ENCODE measurements at regions of chr19 and their contacts with region 1.

Region 1: GRCh38 chr19:42132851-42133528 is 744 bp upstream of the POU2F2 start:
- DNase-seq: peak; percentile 54 to 89 (median 68)
- ATAC-seq: peak in 3 of 4 donors; percentile 71 to 87 (median 74)
- H3K4me3 ChIP-seq: peak overlapping the region in 10 of 12 donors; percentile 12 to 65 (median 32)
- H3K27ac ChIP-seq: peak overlapping the region in 1 of 12 donors; percentile 64
- H3K4me1 ChIP-seq: peaks cover 2 to 54% (median 10%) of the 10 kb centered on the region in 12 donors
- H3K27me3 ChIP-seq: peaks cover 6 to 53% (median 21%) of the 10 kb centered on the region in 9 donors
- CTCF ChIP-seq: peak; percentile 90 to 99 (median 96)
- POLR2A ChIP-seq: no peak

Region 2: DNA sequence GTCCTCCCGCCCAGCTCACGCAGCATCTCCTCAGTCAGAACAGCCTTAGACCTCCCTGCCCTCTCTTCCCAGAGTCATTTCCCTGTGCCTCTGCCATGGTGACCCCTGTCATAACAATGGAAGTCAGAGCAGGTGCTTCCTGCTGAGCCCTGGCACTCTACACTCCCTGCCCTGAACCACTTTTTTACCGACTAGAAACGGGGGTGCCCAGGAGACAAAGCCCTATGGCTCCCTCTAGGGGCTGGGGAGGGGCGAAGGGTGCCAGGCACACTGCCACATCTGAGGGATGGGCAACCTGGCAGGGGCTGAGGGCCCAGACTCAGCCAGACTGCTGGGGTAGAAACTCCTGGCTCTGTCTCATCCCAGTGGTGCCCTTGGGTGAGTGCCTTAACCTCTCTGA is 40.6 kb before region 1 on chr19:
- intact Hi-C with region 1: no loop called
- DNase-seq: no peak
- ATAC-seq: peak in 3 of 4 donors; percentile 55 to 63 (median 57)
- H3K4me3 ChIP-seq: no peak overlapping the region
- H3K27ac ChIP-seq: no peak overlapping the region
- H3K4me1 ChIP-seq: peaks cover 0 to 34% (median 0%) of the 10 kb centered on the region in 12 donors
- H3K27me3 ChIP-seq: peaks cover 0 to 31% (median 13%) of the 10 kb centered on the region in 9 donors
- CTCF ChIP-seq: peak; percentile 16 to 51 (median 38)
- POLR2A ChIP-seq: no peak

Region 3: GRCh38 chr19:42176990-42177685 is 44.1 kb after region 1 on chr19:
- intact Hi-C with region 1: loop called in 5 of 10 experiments (anchors 2 to 5 kb)
- DNase-seq: peak; percentile 59 to 86 (median 73)
- ATAC-seq: peak in 3 of 4 donors; percentile 89 to 97 (median 94)
- H3K4me3 ChIP-seq: peak overlapping the region; percentile 18 to 61 (median 44)
- H3K27ac ChIP-seq: no peak overlapping the region
- H3K4me1 ChIP-seq: peaks cover 0 to 18% (median 8%) of the 10 kb centered on the region in 12 donors
- H3K27me3 ChIP-seq: peaks cover 9 to 76% (median 60%) of the 10 kb centered on the region in 9 donors
- CTCF ChIP-seq: peak in 11 of 12 donors; percentile 14 to 71 (median 34)
- POLR2A ChIP-seq: no peak

Region 4: GRCh38 chr19:42295831-42296525 is 163.0 kb after region 1 on chr19:
- intact Hi-C with region 1: loop called in 2 of 10 experiments (anchors 5 to 10 kb)
- DNase-seq: peak; percentile 76 to 90 (median 82)
- ATAC-seq: peak; percentile 42 to 84 (median 77)
- H3K4me3 ChIP-seq: no peak overlapping the region
- H3K27ac ChIP-seq: no peak overlapping the region
- H3K4me1 ChIP-seq: no peaks in the 10 kb centered on the region
- H3K27me3 ChIP-seq: no peaks in the 10 kb centered on the region
- CTCF ChIP-seq: peak; percentile 89 to 97 (median 94)
- POLR2A ChIP-seq: no peak

Region 5: DNA sequence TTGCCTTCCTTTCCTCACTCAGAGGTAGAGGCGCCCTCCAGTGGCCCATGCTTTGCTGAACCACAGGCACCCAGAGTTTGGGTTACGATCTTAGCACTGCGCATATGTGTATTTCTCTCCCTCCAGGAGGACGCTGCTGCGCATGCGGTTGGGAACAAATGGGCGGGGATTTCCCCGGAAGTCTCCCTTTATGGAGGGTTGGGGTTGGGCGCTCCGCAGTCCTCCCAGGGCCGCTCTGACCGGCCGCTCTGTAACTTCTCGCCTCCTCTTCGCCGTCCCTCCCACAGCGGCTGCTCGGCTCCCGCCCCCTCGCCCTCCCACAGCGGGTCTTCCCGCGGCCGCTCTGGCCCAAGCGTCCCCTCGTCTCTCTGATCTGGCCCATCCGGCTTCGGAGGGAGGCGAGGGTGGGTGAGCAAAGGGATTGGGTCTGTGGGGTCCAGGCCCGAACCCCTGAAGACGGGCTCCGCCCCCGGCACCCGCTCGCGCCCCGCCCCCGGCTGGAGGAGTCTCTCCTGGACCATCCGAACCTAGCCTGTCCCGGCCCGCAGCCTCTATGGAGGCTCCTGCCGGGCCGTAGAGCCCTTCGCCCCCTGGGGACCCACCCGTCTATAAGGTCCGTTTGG is 192.4 kb after region 1 on chr19 and contains the start of gene MEGF8:
- intact Hi-C with region 1: loop called in 5 of 10 experiments (anchors 2 to 10 kb)
- DNase-seq: peak; percentile 97 to 99 (median 98)
- ATAC-seq: peak; percentile 97 to 99 (median 98)
- H3K4me3 ChIP-seq: peak within 1 kb of the TSS; percentile 68 to 98 (median 88)
- H3K27ac ChIP-seq: peak within 1 kb of the TSS; percentile 29 to 88 (median 81)
- H3K4me1 ChIP-seq: peaks cover 2 to 53% (median 25%) of the 10 kb centered on the region in 12 donors
- H3K27me3 ChIP-seq: peaks cover 10 to 25% (median 21%) of the 10 kb centered on the region in 9 donors
- CTCF ChIP-seq: peak; percentile 76 to 97 (median 84)
- POLR2A ChIP-seq: peak; percentile 4 to 85
- total RNA-seq, gene MEGF8: 26.5 to 50.4 (median 36.6) TPM

Region 6: DNA sequence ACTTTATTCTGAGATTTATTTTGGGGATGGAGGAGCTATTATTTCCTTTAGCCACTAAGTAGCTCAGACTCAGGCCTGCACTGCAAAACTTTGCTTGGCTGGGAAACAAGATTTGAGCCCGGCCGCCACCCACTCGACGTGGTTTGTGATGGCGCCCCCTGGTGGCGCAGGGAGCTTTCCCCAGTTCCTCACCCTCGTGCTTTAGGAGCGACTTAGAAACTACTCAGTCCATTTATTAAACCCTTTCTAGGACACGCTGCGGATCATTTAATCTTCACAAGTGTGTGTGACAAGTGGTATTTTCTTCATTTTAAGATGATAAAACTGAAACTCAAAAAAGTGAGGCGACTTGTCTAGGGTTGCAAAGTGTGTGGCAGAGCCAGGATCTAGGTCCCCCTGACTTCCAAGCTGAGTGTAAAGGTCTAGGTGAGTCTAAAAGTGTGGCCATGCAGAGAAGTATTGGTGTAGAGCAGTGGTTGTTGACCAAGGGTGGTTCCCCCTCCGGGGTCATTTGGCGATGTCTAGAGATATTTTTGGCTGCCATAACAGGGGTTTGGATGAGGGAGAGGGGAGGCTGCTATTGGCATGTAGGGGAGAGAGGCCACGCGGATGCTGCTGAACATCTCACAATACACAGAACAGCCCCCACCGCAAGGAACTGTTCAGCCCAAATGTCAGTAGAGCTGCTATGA is 307.5 kb after region 1 on chr19:
- intact Hi-C with region 1: loop called in 3 of 10 experiments (anchors 10 kb)
- DNase-seq: peak; percentile 67 to 88 (median 78)
- ATAC-seq: peak; percentile 51 to 78 (median 70)
- H3K4me3 ChIP-seq: no peak overlapping the region
- H3K27ac ChIP-seq: no peak overlapping the region
- H3K4me1 ChIP-seq: peaks cover 0 to 18% (median 5%) of the 10 kb centered on the region in 12 donors
- H3K27me3 ChIP-seq: no peaks in the 10 kb centered on the region
- CTCF ChIP-seq: peak; percentile 86 to 96 (median 92)
- POLR2A ChIP-seq: no peak